ENCODE measurements at regions of chr2 and their contacts with region 1.

Region 1: DNA sequence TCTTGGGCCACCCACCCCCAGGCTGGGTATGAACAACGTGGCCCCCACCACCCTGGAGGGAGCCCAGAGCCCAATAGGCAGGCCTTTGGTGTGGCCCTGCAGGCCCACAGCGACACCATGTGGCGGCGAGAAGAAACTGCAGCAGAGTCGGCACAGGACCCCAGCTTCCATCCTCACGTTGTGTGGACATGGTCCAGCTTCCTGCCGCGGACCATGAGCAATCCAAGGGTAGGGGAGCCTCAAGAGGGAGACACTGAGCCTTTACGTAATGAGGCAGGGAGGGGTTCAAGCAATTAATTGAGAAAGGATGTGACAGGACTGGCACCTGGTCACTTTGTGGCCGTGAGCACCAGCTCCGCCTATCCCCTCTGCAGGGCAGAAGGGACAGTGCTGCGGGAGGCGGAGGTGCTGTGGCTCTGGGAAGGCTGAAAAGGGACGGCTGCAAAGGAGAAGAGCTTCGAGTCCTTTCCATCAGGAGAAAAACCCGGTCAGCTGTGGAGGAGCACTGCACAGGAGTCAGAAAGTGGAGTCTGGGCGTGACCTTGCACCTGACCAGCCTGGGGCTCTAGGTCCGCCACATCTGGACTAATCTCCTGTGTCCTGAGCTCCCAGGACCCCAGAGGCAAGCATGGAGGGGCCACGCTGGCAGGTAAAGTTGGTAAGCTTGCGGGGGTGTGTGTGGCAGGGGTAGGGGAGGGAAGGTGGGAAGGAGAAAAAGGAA is 44.8 kb downstream of the TMEM37 start:
- DNase-seq: peak in 3 of 4 donors; percentile 57 to 83 (median 75)
- ATAC-seq: peak; percentile 93
- H3K4me3 ChIP-seq: no peak overlapping the region
- H3K27ac ChIP-seq: no peak overlapping the region
- H3K4me1 ChIP-seq: no peaks in the 10 kb centered on the region
- H3K27me3 ChIP-seq: no peaks in the 10 kb centered on the region
- CTCF ChIP-seq: peak; percentile 95 to 98

Region 2: DNA sequence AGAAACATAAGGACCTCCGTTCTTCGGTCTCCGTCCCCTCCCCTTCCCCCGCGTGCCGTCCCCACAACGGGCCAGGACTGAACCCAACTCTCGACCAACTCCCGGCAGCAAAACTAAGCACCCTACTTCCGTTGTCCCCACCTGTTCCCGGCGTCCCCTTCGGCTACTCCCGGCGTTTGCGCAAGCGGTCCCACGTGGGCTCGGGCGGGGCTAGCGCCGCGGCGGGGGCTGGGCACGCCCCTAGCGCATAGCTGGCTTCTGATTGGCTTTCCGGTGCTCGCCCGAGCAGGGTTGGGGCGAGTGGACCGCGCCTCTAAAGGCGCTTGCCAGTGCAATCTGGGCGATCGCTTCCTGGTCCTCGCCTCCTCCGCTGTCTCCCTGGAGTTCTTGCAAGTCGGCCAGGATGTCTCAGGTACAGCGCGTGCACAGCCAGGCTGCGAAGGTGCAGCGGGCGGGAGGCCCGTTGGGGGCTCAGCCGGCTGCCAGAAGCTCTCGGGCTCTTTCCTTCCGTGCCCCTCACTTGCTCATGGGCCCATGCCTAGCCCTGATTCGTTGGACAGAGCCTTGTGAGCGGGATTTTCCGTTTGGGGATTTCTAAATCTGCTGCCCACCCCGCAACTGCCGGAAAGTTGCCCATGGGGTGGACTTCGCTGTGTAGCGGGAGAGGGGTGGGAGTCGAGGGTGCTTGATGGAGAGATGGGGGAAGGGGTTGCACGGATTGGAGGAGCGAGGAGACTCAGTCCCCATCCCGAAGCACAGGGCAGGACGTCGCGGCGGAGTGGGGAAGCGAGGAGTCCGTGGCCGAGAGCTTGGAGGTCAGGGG is 109.6 kb before region 1 on chr2 and contains the starts of genes C2orf76 and DBI:
- intact Hi-C with region 1: no loop called
- DNase-seq: peak; percentile 94 to 99 (median 96)
- ATAC-seq: peak; percentile 97
- H3K4me3 ChIP-seq: peak within 1 kb of the TSS; percentile 64 to 92
- H3K27ac ChIP-seq: peak within 1 kb of the TSS; percentile 86 to 89
- H3K4me1 ChIP-seq: peaks cover 15 to 42% of the 10 kb centered on the region in 2 donors
- H3K27me3 ChIP-seq: no peaks in the 10 kb centered on the region
- CTCF ChIP-seq: no peak
- polyA plus RNA-seq, gene C2orf76: 15.9 to 17.1 (median 16.2) TPM
- polyA plus RNA-seq, gene DBI: 125 to 185 (median 152) TPM

Region 3: DNA sequence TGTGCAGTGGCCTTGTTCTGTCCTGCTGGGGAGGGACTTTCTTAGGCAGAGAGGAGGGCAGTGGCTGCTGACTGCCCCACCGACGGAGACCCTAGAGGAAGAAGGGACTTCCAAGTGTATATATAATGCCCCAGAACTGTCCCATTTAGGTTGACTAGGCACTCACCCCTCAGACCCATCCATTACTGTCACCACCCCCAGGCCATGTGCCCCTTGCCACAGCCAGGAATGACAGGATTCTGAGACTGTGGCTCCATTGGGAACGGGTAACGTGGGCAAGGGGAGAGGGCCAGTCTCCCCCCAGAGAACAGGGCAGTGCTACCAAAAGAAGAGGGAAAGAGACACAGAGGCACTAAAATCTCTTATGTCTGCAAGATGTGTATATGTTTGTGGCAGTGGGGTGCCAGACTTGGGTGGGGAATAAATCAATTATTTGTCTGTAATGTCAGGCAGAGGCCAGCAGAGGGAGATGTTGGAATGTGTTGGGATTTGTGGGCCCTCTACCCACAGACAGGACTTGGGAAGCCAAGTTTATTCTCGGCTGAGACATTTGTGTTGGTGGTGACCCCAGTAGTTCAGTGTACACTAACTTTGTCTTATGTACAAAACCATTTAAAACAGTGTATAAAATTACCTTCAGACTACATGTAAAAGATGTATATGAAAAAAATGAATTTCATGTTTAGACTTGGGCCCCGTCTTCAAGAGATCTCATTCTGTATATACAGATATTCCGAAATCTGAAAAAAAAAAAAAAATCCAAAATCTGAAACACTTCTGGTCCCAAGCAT is 68.8 kb before region 1 on chr2:
- intact Hi-C with region 1: loop called (anchors 2 to 10 kb)
- DNase-seq: peak in 2 of 4 donors; percentile 57 to 72
- ATAC-seq: peak; percentile 95
- H3K4me3 ChIP-seq: no peak overlapping the region
- H3K27ac ChIP-seq: no peak overlapping the region
- H3K4me1 ChIP-seq: peaks cover 5% of the 10 kb centered on the region in 2 donors
- H3K27me3 ChIP-seq: no peaks in the 10 kb centered on the region
- CTCF ChIP-seq: peak; percentile 64 to 82